K562 (cell line): ENCODE measurements at regions of chr14 and their contacts with region 1.

Region 1: GRCh38 chr14:90903101-90903500 is 86.9 kb upstream of the TTC7B start:
- DNase-seq: peak; percentile 43 to 59 (median 49)
- ATAC-seq: peak; percentile 92
- H3K4me3 ChIP-seq: no peak overlapping the region
- H3K27ac ChIP-seq: no peak overlapping the region
- H3K4me1 ChIP-seq: no peaks in the 10 kb centered on the region; a peak in 1 of 5 replicates
- H3K27me3 ChIP-seq: no peaks in the 10 kb centered on the region
- CTCF ChIP-seq: peak; percentile 56 to 69 (median 62); a peak in 5 of 6 replicates
- EP300 ChIP-seq: no peak
- POLR2A ChIP-seq: no peak
- RAD21 ChIP-seq: peak; percentile 66 to 79

Region 2: DNA sequence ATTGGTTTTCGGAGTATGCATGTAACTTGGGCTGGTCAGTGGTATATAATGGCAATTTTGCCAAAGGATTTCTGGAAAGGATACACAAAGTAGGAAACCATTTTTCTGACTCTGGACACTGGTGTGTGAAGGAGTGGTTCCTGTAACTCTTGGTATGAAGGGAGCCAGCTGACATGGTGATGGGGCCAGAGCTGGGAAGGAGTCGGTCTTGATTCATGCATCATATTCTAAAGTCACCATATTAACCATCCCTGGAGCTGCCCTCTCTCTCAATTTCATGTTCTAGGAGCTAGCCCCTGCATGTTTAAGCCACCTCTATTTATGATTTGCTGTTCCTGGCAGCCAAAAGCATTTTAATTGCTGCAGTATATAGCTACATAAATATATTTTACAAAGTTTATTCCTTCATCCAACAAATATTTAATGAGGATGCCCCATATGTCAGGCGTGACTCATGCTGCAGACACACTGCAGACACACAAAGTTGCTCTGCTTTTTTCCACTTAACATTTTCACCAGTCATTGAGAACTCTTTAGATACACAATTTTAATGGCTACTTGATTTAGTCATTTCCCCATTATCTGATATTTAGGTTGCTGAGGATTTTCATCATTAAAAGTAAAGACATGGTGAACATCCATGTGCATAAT is 725.4 kb before region 1 on chr14:
- CTCF ChIA-PET with region 1: no interaction called
- POLR2A ChIA-PET with region 1: no interaction called
- in situ Hi-C with region 1: no loop called
- intact Hi-C with region 1: no loop called
- DNase-seq: no peak
- ATAC-seq: no peak
- H3K4me3 ChIP-seq: no peak overlapping the region
- H3K27ac ChIP-seq: no peak overlapping the region
- H3K4me1 ChIP-seq: no peaks in the 10 kb centered on the region
- H3K27me3 ChIP-seq: no peaks in the 10 kb centered on the region; a peak in 1 of 5 replicates
- CTCF ChIP-seq: no peak
- EP300 ChIP-seq: no peak
- POLR2A ChIP-seq: no peak
- RAD21 ChIP-seq: no peak

Region 3: GRCh38 chr14:90703841-90704737 is 199.0 kb before region 1 on chr14:
- CTCF ChIA-PET with region 1: no interaction called
- POLR2A ChIA-PET with region 1: no interaction called
- in situ Hi-C with region 1: no loop called
- intact Hi-C with region 1: no loop called
- DNase-seq: no peak
- ATAC-seq: no peak
- H3K4me3 ChIP-seq: no peak overlapping the region
- H3K27ac ChIP-seq: no peak overlapping the region
- H3K4me1 ChIP-seq: no peaks in the 10 kb centered on the region
- H3K27me3 ChIP-seq: no peaks in the 10 kb centered on the region
- CTCF ChIP-seq: no peak
- EP300 ChIP-seq: no peak
- POLR2A ChIP-seq: no peak
- RAD21 ChIP-seq: no peak

Region 4: GRCh38 chr14:90883782-90884181 is 19.3 kb before region 1 on chr14:
- CTCF ChIA-PET with region 1: no interaction called
- POLR2A ChIA-PET with region 1: no interaction called
- in situ Hi-C with region 1: no loop called
- intact Hi-C with region 1: no loop called
- DNase-seq: no peak
- ATAC-seq: no peak
- H3K4me3 ChIP-seq: no peak overlapping the region
- H3K27ac ChIP-seq: no peak overlapping the region
- H3K4me1 ChIP-seq: no peaks in the 10 kb centered on the region
- H3K27me3 ChIP-seq: no peaks in the 10 kb centered on the region
- CTCF ChIP-seq: no peak
- EP300 ChIP-seq: no peak
- POLR2A ChIP-seq: no peak
- RAD21 ChIP-seq: no peak

Region 5: DNA sequence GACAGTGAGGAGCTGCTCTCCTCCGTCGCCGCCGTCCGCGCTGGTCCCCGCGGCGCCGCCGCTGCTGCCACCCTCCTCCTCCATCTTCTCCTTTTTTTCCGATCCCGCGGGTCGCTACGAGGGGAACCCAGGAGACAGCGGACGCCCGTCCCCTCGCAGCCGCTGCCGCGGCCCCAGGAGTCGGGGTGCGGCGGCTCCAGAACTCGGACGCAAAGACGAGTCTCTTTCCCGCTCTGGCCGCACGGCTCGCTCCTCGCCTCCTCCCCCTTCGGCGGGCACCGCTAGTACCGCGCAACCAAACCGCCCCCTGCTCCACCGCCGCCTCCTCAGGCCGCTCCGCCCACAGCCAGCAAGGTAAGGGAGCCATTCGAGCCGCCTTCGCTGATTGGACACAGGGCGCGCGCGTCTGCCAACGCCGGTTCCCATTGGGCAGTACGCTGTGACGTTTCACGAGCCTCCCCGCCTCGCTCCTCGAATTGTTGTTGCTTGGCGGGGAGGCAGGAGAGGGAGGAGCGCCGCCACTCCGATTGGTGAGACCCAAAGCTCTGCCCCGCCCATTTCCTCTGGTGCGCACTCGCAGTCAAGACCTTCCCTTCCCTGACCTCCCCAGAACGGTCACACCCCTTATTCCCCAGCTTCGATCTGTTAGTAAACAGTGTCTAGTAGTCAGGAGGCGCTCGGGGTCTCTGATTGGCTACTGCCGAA is 157.4 kb after region 1 on chr14 and contains the start of gene RPS6KA5:
- CTCF ChIA-PET with region 1: no interaction called
- POLR2A ChIA-PET with region 1: no interaction called
- in situ Hi-C with region 1: no loop called
- intact Hi-C with region 1: loop called (anchors 2 kb)
- DNase-seq: peak; percentile 92 to 98 (median 94)
- ATAC-seq: peak; percentile 96
- H3K4me3 ChIP-seq: peak within 1 kb of the TSS; percentile 59
- H3K27ac ChIP-seq: peak within 1 kb of the TSS; percentile 87
- H3K4me1 ChIP-seq: peaks cover 8% of the 10 kb centered on the region in 2 experiments; a peak in 3 of 5 replicates
- H3K27me3 ChIP-seq: no peaks in the 10 kb centered on the region
- CTCF ChIP-seq: no peak
- EP300 ChIP-seq: no peak; the same call in 1 of the 2 replicates
- POLR2A ChIP-seq: peak; percentile 72
- RAD21 ChIP-seq: peak in 1 of 2 experiments; percentile 6; a peak in 2 of 4 replicates
- polyA plus RNA-seq, gene RPS6KA5: 0.88 to 0.96 TPM

Region 6: DNA sequence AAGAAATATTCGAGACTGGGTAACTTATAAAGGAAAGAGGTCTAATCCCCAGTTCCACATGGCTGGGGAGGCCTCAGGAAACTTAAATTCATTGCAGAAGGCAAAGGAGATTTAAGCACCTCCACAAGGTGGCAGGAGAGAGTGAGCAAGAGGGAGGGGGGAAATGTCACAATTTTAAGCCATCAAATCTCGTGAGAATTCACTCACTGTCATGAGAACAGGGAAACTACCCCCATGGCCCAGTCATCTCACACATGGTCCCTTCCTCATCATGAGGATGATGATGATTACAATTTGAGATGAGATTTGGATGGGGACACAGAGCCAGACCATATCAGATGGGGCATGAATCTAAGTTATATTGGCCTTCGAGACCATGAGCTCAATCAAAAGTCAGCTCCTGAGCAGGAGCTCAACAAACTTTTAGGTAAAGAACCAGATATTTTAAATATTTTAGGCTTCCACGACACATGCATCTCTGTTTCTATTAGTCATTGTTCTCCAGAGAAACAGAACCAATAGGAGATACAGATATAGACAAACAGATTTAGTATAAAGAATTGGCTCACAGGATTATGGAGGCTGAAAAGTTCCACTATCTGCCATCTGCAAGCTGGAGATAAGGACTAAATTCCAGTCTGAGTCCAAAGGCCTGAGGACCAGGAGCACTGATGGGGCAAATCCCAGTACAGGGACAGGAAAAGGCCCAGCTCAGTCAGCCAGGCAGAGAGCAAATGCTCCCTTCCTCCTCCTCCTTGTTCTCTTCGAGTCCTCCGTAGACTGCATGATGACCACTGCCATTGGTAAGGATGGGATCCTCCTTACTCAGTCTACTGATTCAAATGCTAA is 235.6 kb after region 1 on chr14:
- CTCF ChIA-PET with region 1: no interaction called
- POLR2A ChIA-PET with region 1: no interaction called
- in situ Hi-C with region 1: no loop called
- intact Hi-C with region 1: loop called (anchors 10 kb)
- DNase-seq: peak; percentile 34 to 73 (median 51)
- ATAC-seq: peak; percentile 89
- H3K4me3 ChIP-seq: no peak overlapping the region
- H3K27ac ChIP-seq: peak overlapping the region; percentile 6; the same call in 1 of the 3 replicates
- H3K4me1 ChIP-seq: peaks cover 0 to 20% of the 10 kb centered on the region in 2 experiments; a peak in 3 of 5 replicates
- H3K27me3 ChIP-seq: no peaks in the 10 kb centered on the region
- CTCF ChIP-seq: peak; percentile 68 to 75 (median 71)
- EP300 ChIP-seq: no peak
- POLR2A ChIP-seq: no peak
- RAD21 ChIP-seq: peak; percentile 34 to 62

Region 7: DNA sequence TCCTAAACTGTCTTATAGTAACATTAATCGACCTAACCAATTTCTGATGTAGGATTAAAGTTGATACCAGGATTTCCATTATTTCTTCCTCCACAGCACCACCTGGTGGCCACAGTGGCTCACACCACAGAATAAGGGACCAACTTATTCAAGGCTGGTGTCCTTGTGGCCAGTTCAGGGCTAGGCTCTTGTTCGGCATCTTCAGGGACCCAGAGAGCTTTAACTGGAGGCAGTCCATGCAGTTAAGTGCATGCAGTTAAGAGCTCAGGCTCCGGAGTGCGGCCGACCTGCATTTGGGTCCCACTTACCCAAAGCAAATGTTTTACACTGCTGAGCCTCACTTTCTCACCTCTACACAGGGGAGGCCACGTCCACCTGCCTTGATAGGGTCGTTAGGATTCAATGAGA is 383.4 kb after region 1 on chr14:
- CTCF ChIA-PET with region 1: interaction called, 12 read pairs
- POLR2A ChIA-PET with region 1: no interaction called
- in situ Hi-C with region 1: loop called (anchors 5 kb)
- intact Hi-C with region 1: loop called (anchors 1 kb)
- DNase-seq: peak; percentile 73 to 79 (median 74)
- ATAC-seq: peak; percentile 99
- H3K4me3 ChIP-seq: no peak overlapping the region
- H3K27ac ChIP-seq: no peak overlapping the region
- H3K4me1 ChIP-seq: no peaks in the 10 kb centered on the region
- H3K27me3 ChIP-seq: no peaks in the 10 kb centered on the region
- CTCF ChIP-seq: peak; percentile 82 to 95 (median 88)
- EP300 ChIP-seq: no peak
- POLR2A ChIP-seq: no peak
- RAD21 ChIP-seq: peak; percentile 73 to 90

Region 8: DNA sequence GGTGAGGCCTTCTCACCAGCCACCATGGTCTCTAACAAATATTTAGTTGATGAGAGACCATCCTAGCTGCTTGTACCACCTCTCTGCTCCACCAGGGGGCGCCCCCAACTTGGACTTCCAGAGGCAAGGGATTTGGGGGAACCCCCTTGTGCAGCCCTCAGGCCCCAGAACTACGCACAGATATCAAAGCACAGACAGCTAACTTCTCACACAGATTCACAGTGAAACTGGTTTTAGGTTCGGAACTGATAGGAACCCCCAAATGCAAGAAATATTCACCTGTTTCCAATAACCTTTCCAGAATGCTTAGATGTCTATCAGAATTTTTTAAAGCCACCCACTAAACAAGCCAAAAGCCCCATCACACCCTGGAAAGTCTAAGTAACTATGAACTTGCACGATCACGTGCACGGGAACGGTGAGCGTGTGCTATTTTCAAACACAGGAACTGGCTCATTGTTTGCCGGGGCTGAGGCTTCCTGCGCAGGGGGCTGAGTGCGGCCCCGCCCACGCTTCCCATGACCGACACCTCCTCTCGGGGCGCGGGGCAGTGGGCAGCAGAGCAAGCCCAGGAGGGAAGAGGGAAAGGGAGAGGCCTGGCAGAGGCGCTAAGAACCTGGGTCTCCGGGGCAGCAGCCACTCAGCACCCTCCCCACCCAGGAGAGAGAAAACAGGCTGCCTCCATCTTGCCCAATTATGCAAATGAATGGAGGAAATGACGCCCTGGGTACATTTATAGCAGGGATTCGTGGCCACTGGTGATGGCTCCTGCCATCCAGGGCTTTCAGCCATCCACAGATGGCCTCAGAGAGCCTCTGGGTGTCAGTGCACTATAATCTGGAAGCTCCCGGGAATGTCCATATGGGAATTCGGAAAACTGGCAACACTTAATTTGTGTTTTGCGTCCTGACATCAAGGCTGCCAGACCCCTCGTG is 420.8 kb after region 1 on chr14:
- CTCF ChIA-PET with region 1: no interaction called
- POLR2A ChIA-PET with region 1: no interaction called
- in situ Hi-C with region 1: no loop called
- intact Hi-C with region 1: no loop called
- DNase-seq: peak; percentile 58 to 71 (median 68)
- ATAC-seq: peak; percentile 81
- H3K4me3 ChIP-seq: no peak overlapping the region
- H3K27ac ChIP-seq: no peak overlapping the region
- H3K4me1 ChIP-seq: peaks cover 14 to 19% of the 10 kb centered on the region in 2 experiments; a peak in 4 of 5 replicates
- H3K27me3 ChIP-seq: no peaks in the 10 kb centered on the region
- CTCF ChIP-seq: peak; percentile 69 to 88 (median 80)
- EP300 ChIP-seq: no peak
- POLR2A ChIP-seq: no peak
- RAD21 ChIP-seq: peak; percentile 89